ENCODE measurements at regions of chr22 and their contacts with region 1.

Region 1: GRCh38 chr22:23913661-23914353 is 19.6 kb downstream of the MIF start:
- DNase-seq: peak; percentile 99
- H3K4me3 ChIP-seq: peak overlapping the region; percentile 51
- H3K4me3 Mint-ChIP-seq: peak overlapping the region; percentile 85
- H3K27ac Mint-ChIP-seq: peak overlapping the region; percentile 87
- H3K4me1 ChIP-seq: peaks cover 27% of the 10 kb centered on the region
- H3K4me1 Mint-ChIP-seq: peaks cover 16% of the 10 kb centered on the region
- H3K27me3 ChIP-seq: no peaks in the 10 kb centered on the region
- H3K27me3 Mint-ChIP-seq: no peaks in the 10 kb centered on the region
- CTCF ChIP-seq: no peak

Region 2: GRCh38 chr22:23632178-23632577 is 281.6 kb before region 1 on chr22 and contains the start of gene DRICH1:
- CTCF ChIA-PET with region 1: no interaction called
- POLR2A ChIA-PET with region 1: no interaction called
- intact Hi-C with region 1: no loop called
- DNase-seq: no peak
- H3K4me3 ChIP-seq: no peak within 1 kb of the TSS
- H3K4me3 Mint-ChIP-seq: no peak within 1 kb of the TSS
- H3K27ac Mint-ChIP-seq: no peak within 1 kb of the TSS
- H3K4me1 ChIP-seq: 0 out of 2 replicates have a peak, but pooled peaks cover 2% of the 10 kb centered on the region
- H3K4me1 Mint-ChIP-seq: peaks cover 6% of the 10 kb centered on the region
- H3K27me3 ChIP-seq: no peaks in the 10 kb centered on the region
- H3K27me3 Mint-ChIP-seq: no peaks in the 10 kb centered on the region
- CTCF ChIP-seq: no peak
- total RNA-seq, gene DRICH1: 4.7 and 4.8 TPM in 2 replicates

Region 3: DNA sequence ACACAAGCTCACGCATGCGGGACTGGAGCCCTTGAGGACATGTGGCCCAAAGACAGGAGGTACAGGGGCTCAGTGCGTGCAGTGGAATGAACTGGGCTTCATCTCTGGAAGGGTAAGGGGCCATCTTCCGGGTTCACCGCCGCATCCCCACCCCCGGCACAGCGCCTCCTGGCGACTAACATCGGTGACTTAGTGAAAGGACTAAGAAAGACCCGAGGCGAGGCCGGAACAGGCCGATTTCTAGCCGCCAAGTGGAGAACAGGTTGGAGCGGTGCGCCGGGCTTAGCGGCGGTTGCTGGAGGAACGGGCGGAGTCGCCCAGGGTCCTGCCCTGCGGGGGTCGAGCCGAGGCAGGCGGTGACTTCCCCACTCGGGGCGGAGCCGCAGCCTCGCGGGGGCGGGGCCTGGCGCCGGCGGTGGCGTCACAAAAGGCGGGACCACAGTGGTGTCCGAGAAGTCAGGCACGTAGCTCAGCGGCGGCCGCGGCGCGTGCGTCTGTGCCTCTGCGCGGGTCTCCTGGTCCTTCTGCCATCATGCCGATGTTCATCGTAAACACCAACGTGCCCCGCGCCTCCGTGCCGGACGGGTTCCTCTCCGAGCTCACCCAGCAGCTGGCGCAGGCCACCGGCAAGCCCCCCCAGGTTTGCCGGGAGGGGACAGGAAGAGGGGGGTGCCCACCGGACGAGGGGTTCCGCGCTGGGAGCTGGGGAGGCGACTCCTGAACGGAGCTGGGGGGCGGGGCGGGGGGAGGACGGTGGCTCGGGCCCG is 19.7 kb before region 1 on chr22 and contains the start of gene MIF:
- CTCF ChIA-PET with region 1: interaction called, 18 read pairs
- POLR2A ChIA-PET with region 1: interaction called, 45 read pairs
- intact Hi-C with region 1: loop called (anchors 1 kb)
- DNase-seq: peak; percentile 97 to 99
- H3K4me3 ChIP-seq: peak within 1 kb of the TSS; percentile 84
- H3K4me3 Mint-ChIP-seq: peak within 1 kb of the TSS; percentile 94
- H3K27ac Mint-ChIP-seq: peak within 1 kb of the TSS; percentile 98
- H3K4me1 ChIP-seq: peaks cover 19% of the 10 kb centered on the region
- H3K4me1 Mint-ChIP-seq: peaks cover 13% of the 10 kb centered on the region
- H3K27me3 ChIP-seq: no peaks in the 10 kb centered on the region
- H3K27me3 Mint-ChIP-seq: no peaks in the 10 kb centered on the region
- CTCF ChIP-seq: peak; percentile 83 to 85
- total RNA-seq, gene MIF: 762 and 795 TPM in 2 replicates